ENCODE measurements at regions of chr5 and their contacts with region 1.

Region 1: DNA sequence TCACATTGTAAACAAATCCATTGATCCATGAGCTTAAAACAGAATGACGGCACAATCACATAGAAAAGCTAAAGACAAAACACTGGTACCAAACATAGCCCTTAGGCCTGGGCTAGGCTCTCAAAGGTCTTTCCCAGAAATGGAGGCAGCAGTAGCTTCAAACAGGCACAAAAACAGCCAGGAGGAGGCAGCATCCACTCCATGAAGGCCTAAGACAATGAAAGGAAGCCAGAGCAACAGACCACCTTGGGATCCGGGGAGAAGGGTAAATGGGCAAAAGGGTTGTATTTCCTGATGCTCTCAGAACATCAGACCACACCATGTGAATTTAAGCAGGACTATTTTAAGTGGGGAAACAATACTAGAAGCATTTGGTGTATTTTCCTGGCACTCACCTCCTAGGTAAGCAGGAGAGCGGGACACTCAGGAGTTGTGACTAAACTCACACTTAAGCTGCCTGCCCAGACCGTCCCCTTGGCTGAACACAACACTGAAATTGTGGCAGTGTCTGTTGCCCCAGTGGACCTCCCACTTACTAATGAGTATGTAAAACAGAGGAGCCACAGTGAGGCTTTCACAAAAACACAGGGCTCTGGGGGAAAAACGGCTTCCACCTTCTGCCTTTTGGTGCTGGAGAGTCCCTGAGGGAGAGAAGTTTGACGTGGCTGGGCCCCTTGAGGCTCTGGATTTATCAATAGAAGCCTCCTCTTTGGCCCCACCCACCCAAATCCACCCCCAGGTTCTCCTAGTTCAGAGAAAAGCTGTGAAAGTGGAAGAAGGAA is 11.9 kb downstream of the GNPDA1 start:
- DNase-seq: no peak
- ATAC-seq: no peak

Region 2: GRCh38 chr5:141850244-141850768 is 150.6 kb before region 1 on chr5:
- intact Hi-C with region 1: no loop called
- DNase-seq: peak; percentile 55
- ATAC-seq: peak; percentile 74

Region 3: DNA sequence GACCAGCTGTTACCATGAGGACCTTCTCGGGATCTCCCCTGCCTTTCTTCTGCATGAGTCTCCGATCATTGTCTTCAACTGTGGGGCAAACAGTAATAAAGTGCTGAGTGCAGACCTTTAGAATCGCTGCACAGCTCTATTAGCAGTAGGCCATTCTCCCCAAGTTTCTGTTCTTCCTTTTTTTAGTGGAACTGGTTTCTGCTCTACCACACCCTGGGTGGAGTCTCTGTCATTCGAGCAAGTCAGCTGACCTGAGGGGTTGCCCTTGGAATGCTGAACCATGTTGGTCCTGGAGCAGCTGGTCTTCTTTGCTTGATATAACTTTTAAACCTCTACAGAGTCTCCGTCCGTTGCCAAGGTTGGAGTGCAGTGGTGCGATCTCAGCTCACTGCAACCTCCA is 45.3 kb after region 1 on chr5:
- intact Hi-C with region 1: no loop called
- DNase-seq: no peak
- ATAC-seq: peak; percentile 71

Region 4: GRCh38 chr5:142568283-142568995 is 567.5 kb after region 1 on chr5:
- intact Hi-C with region 1: loop called (anchors 10 kb)
- DNase-seq: no peak
- ATAC-seq: peak; percentile 38

Measured in Right ventricle myocardium superior (tissue), 1 donor.